ENCODE measurements at regions of chr9 and their contacts with region 1.

Region 1: GRCh38 chr9:70553707-70554673 is 139.5 kb upstream of the KLF9 start:
- DNase-seq: peak in 2 of 10 donors; percentile 16 to 69

Region 2: GRCh38 chr9:70392189-70392588 is 161.8 kb before region 1 on chr9:
- intact Hi-C with region 1: no loop called
- DNase-seq: no peak

Region 3: GRCh38 chr9:70504834-70505233 is 49.2 kb before region 1 on chr9:
- intact Hi-C with region 1: loop called (anchors 10 kb)
- DNase-seq: no peak